ENCODE measurements at regions of chr5 and their contacts with region 1.

Region 1: DNA sequence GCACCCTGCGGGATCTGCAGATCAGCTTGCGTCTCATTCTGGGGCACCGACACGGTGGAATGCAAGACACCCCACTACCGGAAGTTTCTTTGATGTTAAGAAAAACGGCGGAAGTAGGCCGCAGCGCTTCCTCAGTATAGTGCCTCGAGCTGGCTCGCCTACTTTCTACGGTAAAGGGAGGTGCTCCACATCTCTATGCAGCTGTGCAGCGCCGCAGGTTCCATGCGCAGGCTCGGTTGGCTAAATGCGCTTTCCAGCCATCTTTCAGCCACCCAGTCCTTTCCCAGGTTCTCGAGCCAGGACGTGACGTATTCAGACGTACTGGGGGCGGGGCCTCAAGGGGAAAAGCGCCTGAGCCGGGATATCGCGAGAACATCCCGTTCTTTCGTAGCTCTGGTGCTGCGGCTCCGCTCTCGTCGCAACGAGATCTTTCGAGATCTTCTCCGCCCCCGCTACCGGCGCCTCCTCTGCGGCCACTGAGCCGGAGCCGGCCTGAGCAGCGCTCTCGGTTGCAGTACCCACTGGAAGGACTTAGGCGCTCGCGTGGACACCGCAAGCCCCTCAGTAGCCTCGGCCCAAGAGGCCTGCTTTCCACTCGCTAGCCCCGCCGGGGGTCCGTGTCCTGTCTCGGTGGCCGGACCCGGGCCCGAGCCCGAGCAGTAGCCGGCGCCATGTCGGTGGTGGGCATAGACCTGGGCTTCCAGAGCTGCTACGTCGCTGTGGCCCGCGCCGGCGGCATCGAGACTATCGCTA is at the start of gene HSPA4:
- DNase-seq: peak; percentile 93
- ATAC-seq: peak; percentile 85
- H3K4me3 Mint-ChIP-seq: peak within 1 kb of the TSS; percentile 96
- H3K27ac Mint-ChIP-seq: peak within 1 kb of the TSS; percentile 99
- H3K4me1 Mint-ChIP-seq: peaks cover 64% of the 10 kb centered on the region
- H3K27me3 Mint-ChIP-seq: no peaks in the 10 kb centered on the region
- CTCF ChIP-seq: no peak
- total RNA-seq, gene HSPA4: 152 and 162 TPM in 2 replicates

Region 2: DNA sequence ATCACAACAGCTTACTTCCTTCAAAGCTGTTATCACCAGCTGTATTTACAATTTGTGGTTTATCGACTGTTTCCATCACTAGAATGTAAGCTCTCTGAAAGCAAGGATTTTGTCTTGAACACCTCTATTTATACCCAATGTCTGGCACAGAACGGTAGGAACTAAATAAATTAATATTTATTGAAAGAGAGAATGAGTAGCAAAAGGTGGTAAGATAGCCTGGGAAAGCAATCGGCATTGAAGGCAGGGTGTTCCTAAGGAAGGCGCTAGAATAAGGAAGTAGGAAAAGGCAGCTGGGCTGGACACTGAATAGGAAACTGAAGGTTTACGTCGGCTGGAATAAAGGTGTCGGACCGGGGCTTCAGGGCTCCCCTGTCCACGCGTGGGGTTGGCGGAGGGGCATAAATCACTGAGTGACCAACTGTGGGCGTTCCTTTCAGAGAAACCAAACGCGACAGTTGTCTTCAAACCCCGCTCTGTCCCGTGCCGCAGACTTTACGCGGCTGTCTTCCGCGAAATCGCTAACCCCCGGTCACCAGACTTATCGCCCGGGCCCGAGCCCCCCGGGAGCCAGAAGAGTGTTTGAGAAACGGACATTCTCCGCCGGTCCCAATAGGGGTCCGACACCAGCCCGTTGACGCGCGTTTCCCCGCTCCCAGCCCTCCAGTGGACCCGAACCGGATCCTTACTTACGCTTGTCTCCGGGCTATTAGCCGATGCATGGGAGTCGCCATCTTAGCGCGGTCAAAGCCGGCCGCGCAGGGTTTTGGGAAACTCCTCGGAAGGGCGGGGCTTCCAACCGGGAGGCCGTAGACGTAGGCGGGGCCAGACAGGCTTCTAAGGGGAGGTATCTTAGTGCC is 25.7 kb before region 1 on chr5 and contains the start of gene ZCCHC10:
- CTCF ChIA-PET with region 1: no interaction called
- POLR2A ChIA-PET with region 1: interaction called, 132 read pairs
- intact Hi-C with region 1: loop called (anchors 1 kb)
- DNase-seq: peak; percentile 86
- ATAC-seq: peak; percentile 98
- H3K4me3 Mint-ChIP-seq: peak within 1 kb of the TSS; percentile 95
- H3K27ac Mint-ChIP-seq: peak within 1 kb of the TSS; percentile 94
- H3K4me1 Mint-ChIP-seq: peaks cover 41% of the 10 kb centered on the region
- H3K27me3 Mint-ChIP-seq: no peaks in the 10 kb centered on the region
- CTCF ChIP-seq: no peak
- total RNA-seq, gene ZCCHC10: 31.4 and 32.6 TPM in 2 replicates

Region 3: GRCh38 chr5:133032852-133033742 is 18.7 kb before region 1 on chr5:
- CTCF ChIA-PET with region 1: interaction called, 3 read pairs
- POLR2A ChIA-PET with region 1: interaction called, 132 read pairs
- intact Hi-C with region 1: loop called (anchors 1 kb)
- DNase-seq: no peak
- ATAC-seq: peak; percentile 88
- H3K4me3 Mint-ChIP-seq: peak overlapping the region; percentile 68
- H3K27ac Mint-ChIP-seq: peak overlapping the region; percentile 89
- H3K4me1 Mint-ChIP-seq: peaks cover 64% of the 10 kb centered on the region
- H3K27me3 Mint-ChIP-seq: no peaks in the 10 kb centered on the region
- CTCF ChIP-seq: no peak

Region 4: DNA sequence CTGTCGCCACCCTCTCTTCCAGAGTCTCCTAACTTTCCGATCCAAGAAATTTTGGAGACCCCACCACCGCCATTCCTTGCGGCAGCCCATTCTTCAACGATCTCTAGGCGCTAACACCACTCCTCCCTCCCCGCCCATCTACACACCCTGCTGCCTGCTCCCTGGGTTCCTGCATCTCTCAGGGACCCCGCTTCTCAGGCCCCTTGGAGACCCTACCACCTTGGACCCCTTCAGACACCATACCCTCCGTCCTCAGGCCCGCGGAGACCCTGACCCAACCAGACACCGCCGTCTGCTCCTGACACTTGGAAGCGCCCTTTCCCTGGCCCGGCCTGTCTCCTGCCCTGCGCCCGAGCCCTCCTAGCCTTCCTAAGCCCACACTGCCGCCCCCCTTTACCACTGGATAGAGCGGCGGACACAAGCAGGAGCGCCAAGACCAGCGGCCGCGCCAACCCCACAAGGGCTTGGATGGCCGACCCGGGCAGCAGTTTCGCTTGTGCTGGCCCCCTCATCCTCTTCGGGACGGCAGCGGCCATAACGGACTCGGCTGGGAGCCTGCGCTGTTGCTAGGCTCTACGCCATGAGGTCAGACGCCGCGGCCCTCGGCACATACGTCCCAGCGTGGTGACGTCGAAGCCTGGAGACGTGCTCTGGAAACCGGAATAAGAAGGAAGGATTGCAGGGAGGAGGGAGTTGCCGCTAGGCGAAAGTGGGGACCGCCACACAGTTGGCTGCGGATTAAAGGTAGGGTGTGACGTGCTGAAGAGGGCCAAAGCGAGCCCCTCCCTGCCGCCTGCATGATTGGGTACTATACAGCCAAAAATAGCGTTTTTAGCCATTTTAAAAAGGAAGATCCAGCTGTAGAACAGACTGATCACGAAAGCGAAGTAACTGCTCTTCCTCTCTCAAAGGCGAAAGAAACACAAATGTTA is 916.6 kb after region 1 on chr5 and contains the start of gene C5orf15:
- CTCF ChIA-PET with region 1: no interaction called
- POLR2A ChIA-PET with region 1: interaction called, 3 read pairs
- intact Hi-C with region 1: loop called (anchors 5 kb)
- DNase-seq: peak; percentile 83
- ATAC-seq: peak; percentile 90
- H3K4me3 Mint-ChIP-seq: peak within 1 kb of the TSS; percentile 95
- H3K27ac Mint-ChIP-seq: peak within 1 kb of the TSS; percentile 96
- H3K4me1 Mint-ChIP-seq: peaks cover 58% of the 10 kb centered on the region
- H3K27me3 Mint-ChIP-seq: no peaks in the 10 kb centered on the region
- CTCF ChIP-seq: no peak
- total RNA-seq, gene C5orf15: 25.5 and 25.7 TPM in 2 replicates